ENCODE measurements at regions of chr3 and their contacts with region 1.

Region 1: GRCh38 chr3:142595951-142596725 is at the start of gene PLS1:
- DNase-seq: peak; percentile 93 to 95
- ATAC-seq: peak; percentile 95 to 97
- H3K4me3 ChIP-seq: peak within 1 kb of the TSS; percentile 56
- H3K27ac ChIP-seq: peak within 1 kb of the TSS; percentile 90 to 93
- H3K4me1 ChIP-seq: peaks cover 17% of the 10 kb centered on the region
- CTCF ChIP-seq: 0 out of 3 replicates have a peak, but pooled peaks have one; percentile 13
- EP300 ChIP-seq: no peak
- POLR2A ChIP-seq: peak; percentile 93
- RAD21 ChIP-seq: peak; percentile 16 to 47; a peak in 3 of 5 replicates
- polyA plus RNA-seq, gene PLS1: 73.7 and 78.1 TPM in 2 replicates

Region 2: DNA sequence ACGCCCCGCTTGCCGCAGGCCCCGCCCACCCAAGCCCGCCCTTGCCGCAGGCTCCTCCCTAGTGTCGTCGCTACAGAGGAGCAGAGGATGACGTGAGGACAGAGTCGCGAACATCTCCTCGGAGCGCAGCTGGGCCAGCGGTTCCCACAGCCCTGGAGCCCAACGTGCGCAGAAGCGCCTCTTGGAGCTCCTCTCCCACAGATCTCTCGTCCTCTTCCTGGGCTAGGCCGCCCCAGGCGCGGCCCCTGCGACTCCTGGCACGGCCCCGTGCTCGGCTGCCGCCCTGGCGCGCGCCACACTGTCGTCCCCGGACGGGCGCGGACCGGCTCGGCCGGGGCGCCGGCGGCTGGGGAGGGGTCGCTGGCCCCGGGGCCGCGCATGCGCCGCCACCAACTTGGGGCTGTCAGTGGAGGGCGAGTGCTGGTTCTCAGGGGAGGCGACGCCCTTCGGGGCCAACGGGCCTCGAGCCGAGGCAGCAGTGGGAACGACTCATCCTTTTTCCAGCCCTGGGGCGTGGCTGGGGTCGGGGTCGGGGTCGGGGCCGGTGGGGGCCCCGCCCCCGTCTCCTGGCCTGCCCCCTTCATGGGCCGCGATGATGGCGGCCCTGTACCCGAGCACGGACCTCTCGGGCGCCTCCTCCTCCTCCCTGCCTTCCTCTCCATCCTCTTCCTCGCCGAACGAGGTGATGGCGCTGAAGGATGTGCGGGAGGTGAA is 128.0 kb after region 1 on chr3 and contains the start of gene TRPC1:
- CTCF ChIA-PET with region 1: interaction called, 3 read pairs
- POLR2A ChIA-PET with region 1: interaction called, 19 read pairs
- DNase-seq: peak; percentile 87 to 93
- ATAC-seq: peak; percentile 90 to 93
- H3K4me3 ChIP-seq: peak within 1 kb of the TSS; percentile 89
- H3K27ac ChIP-seq: peak within 1 kb of the TSS; percentile 95 to 96
- H3K4me1 ChIP-seq: peaks cover 14% of the 10 kb centered on the region
- CTCF ChIP-seq: no peak
- EP300 ChIP-seq: no peak
- POLR2A ChIP-seq: peak; percentile 92
- RAD21 ChIP-seq: no peak
- polyA plus RNA-seq, gene TRPC1: 26.1 and 32.2 TPM in 2 replicates

Region 3: DNA sequence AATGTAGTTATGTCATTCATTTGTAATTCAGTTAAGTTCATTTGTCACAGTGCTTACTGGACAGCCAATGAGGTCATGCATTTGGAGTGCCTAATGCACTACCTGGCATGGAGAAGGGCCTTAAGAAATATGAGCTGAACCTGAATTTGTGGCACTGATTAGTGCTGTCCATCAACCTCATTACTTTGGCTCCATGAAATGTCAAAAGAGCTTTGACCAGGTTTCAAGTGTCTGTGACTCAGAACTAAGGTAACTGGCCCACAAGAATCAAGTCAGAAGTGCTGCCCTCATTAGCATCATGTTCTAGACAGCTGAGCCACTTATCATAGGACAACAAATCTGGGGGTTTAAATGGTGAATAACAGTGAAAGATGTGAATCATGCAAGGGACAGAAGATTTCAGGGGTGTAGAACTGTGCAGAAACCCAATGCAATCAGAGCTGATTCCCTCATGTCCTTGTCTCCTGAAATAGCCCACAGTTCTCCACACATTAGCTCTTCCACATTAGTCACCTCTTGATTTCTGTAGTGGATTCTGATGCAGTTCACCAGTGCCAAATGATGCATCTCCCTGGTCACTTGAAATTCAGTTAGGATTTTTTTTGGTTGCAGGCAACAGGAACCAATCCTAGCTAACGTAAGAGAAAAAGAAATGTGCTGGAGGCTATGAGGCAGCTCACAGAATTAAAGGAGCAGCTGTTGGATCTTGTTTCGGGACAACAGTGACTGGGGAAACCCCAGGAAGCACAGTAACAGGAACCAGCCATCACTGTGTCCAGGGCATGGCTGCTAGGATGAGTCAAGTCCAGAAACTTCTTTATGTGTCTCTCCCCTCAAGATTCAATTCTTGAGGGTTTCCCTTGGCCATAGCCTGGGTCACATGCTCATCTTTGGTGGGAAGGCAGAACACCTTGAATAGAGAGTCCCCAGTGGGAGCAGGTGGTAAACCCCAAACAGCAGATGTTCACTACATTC is 562.2 kb after region 1 on chr3:
- CTCF ChIA-PET with region 1: no interaction called
- POLR2A ChIA-PET with region 1: no interaction called
- DNase-seq: no peak
- ATAC-seq: no peak; a peak in 1 of 6 replicates
- H3K4me3 ChIP-seq: no peak overlapping the region
- H3K27ac ChIP-seq: no peak overlapping the region
- H3K4me1 ChIP-seq: no peaks in the 10 kb centered on the region
- CTCF ChIP-seq: no peak
- EP300 ChIP-seq: no peak
- POLR2A ChIP-seq: no peak
- RAD21 ChIP-seq: no peak

Measured in A549 (cell line).